Mammary epithelial cell (primary cell): ENCODE measurements at regions of chr5 and their contacts with region 1.

Region 1: DNA sequence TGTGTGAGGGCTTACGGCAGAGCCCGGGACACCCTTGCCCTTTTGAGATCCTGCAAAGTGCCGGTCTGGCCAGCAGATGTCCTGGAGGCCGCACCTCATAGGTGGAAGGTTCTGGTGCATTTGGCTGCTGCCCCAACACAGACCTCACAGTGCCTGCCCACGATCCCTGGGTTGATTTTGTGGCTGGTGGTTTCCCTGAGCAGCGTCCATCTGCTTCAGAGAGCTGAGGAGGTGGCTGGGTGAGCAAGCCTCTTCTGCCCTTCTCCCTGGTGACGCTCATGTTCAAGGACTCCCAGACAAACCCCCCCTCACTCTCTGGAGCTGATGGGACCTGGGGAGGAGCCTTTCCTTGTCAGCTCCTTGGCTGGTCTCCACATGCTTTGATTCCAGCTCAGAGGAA is 18.9 kb downstream of the BNIP1 start:
- DNase-seq: no peak
- H3K4me3 ChIP-seq: no peak overlapping the region
- H3K27ac ChIP-seq: no peak overlapping the region
- H3K4me1 ChIP-seq: no peaks in the 10 kb centered on the region
- H3K27me3 ChIP-seq: no peaks in the 10 kb centered on the region
- CTCF ChIP-seq: no peak

Region 2: GRCh38 chr5:173001229-173001841 is 161.9 kb before region 1 on chr5:
- CTCF ChIA-PET with region 1: no interaction called
- dilution Hi-C with region 1: no loop called
- in situ Hi-C with region 1: no loop called
- intact Hi-C with region 1: no loop called
- DNase-seq: no peak
- H3K4me3 ChIP-seq: no peak overlapping the region
- H3K27ac ChIP-seq: no peak overlapping the region
- H3K4me1 ChIP-seq: no peaks in the 10 kb centered on the region
- H3K27me3 ChIP-seq: no peaks in the 10 kb centered on the region
- CTCF ChIP-seq: no peak

Region 3: GRCh38 chr5:173094012-173094661 is 69.1 kb before region 1 on chr5:
- CTCF ChIA-PET with region 1: no interaction called
- dilution Hi-C with region 1: no loop called
- in situ Hi-C with region 1: no loop called
- intact Hi-C with region 1: no loop called
- DNase-seq: peak; percentile 42
- H3K4me3 ChIP-seq: no peak overlapping the region
- H3K27ac ChIP-seq: no peak overlapping the region
- H3K4me1 ChIP-seq: peaks cover 16% of the 10 kb centered on the region
- H3K27me3 ChIP-seq: no peaks in the 10 kb centered on the region
- CTCF ChIP-seq: no peak

Region 4: DNA sequence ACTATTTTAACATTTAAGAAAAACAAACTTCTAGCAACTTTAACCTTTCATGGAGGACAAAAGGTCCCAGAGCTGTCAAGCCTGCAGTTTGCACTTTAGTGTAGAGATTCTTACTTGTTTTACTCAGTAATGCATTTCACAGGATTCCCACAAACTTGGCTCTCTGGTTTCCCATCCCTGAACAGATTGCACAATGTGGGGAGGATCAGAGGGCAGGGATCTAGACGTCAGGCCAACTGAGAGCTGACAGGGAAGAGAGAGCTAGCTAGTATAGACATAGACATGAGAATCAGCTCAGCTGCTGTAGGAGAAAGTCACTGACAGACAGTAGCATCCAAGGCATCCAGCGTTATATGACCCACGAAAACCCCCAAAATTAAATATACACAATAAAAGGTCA is 39.8 kb before region 1 on chr5:
- CTCF ChIA-PET with region 1: no interaction called
- dilution Hi-C with region 1: no loop called
- in situ Hi-C with region 1: no loop called
- intact Hi-C with region 1: no loop called
- DNase-seq: no peak
- H3K4me3 ChIP-seq: no peak overlapping the region
- H3K27ac ChIP-seq: no peak overlapping the region
- H3K4me1 ChIP-seq: no peaks in the 10 kb centered on the region
- H3K27me3 ChIP-seq: no peaks in the 10 kb centered on the region
- CTCF ChIP-seq: no peak

Region 5: DNA sequence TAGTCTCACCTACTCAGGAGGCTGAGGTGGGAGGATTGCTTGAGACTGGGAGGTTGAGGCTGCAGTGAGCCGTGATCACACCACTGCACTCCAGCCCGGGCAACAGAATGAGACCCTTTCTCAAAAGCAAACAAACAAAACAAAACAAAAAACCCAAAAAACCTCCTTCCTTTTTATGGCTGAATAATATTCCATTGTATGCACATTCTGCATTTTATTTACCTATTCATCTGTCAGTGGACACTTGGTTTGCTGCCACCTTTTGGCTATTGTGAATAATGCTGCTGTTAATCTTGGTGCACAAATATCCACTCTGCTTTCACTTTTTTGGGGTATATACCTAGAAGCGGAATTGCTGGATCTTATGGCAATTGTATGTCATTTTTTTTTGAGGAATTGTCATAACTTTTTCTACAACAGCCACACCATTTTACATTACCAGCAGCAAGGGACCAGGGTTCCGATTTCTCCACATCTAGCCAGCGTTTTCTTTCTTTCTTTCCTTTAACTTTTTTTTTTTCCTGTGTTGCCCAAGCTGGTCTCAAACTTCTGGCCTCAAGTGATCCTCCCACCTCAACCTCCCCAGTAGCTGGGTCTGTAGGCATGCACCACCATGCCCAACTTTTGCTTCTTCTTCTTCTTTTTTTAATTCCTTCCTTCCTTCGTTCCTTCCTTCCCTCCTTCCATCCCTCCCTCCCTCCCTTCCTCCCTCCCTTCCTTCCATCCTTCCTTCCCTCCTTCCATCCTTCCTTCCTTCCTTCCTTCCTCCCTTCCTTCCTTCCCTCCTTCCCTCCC is 41.2 kb after region 1 on chr5:
- CTCF ChIA-PET with region 1: no interaction called
- dilution Hi-C with region 1: no loop called
- in situ Hi-C with region 1: no loop called
- intact Hi-C with region 1: loop called (anchors 1 kb)
- DNase-seq: peak; percentile 12
- H3K4me3 ChIP-seq: no peak overlapping the region
- H3K27ac ChIP-seq: no peak overlapping the region
- H3K4me1 ChIP-seq: peaks cover 11% of the 10 kb centered on the region
- H3K27me3 ChIP-seq: no peaks in the 10 kb centered on the region
- CTCF ChIP-seq: peak; percentile 45 to 66

Region 6: GRCh38 chr5:173283318-173284288 is 120.4 kb after region 1 on chr5:
- CTCF ChIA-PET with region 1: no interaction called
- dilution Hi-C with region 1: no loop called
- in situ Hi-C with region 1: no loop called
- intact Hi-C with region 1: loop called (anchors 1 kb)
- DNase-seq: peak; percentile 75
- H3K4me3 ChIP-seq: peak overlapping the region; percentile 24 to 33 (median 24)
- H3K27ac ChIP-seq: no peak overlapping the region
- H3K4me1 ChIP-seq: peaks cover 9% of the 10 kb centered on the region
- H3K27me3 ChIP-seq: no peaks in the 10 kb centered on the region
- CTCF ChIP-seq: peak; percentile 59 to 71

Region 7: GRCh38 chr5:173573126-173573960 is 410.1 kb after region 1 on chr5:
- CTCF ChIA-PET with region 1: no interaction called
- dilution Hi-C with region 1: no loop called
- in situ Hi-C with region 1: no loop called
- intact Hi-C with region 1: loop called (anchors 1 kb)
- DNase-seq: peak; percentile 37
- H3K4me3 ChIP-seq: peak overlapping the region in 1 of 3 experiments; percentile 16
- H3K27ac ChIP-seq: no peak overlapping the region
- H3K4me1 ChIP-seq: peaks cover 15% of the 10 kb centered on the region
- H3K27me3 ChIP-seq: no peaks in the 10 kb centered on the region
- CTCF ChIP-seq: peak; percentile 80 to 96